Dorsolateral prefrontal cortex (tissue), 120 donors: ENCODE measurements at regions of chr19 and their contacts with region 1.

Region 1: DNA sequence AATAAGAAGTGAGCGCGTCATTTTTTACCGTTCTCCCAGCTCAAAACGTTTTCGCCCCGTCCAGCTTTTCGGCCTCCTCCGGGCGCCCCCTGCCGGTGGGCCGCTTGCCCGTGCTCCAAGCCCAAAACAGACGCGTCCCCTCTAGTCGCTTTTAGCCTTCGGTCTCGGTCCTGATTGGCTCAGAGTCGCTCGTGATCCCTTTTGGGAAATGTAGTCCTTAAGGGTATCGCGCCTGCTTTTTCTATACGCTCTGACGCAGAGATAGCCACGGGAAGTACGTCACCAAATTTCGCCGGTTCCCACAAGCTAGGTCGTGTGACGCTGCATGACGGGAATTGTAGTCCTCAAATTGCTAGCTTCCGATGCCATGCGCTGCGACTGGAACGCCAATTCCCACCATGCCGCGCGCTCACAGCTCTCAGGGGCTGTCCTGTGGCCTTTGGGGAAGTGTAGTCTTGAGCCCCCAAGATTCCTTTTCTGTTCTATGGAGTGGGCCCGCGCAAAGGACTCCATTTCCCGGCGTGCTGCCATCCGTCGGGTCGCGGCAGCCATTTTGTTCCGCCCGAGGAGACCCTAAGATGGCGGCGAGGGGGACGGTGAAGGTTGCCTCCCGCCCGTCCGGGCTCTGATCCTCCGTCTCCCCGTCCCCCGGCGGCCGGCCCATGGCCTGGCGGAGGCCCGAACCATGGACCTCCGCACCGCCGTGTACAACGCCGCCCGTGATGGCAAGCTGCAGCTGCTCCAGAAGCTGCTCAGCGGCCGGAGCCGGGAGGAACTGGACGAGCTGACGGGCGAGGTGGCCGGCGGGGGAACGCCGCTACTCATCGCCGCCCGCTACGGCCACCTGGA is at the start of gene FEM1A:
- DNase-seq: peak; percentile 99 to 100 (median 100)
- H3K4me3 ChIP-seq: peak within 1 kb of the TSS; percentile 55 to 99 (median 89)
- H3K27ac ChIP-seq: peak within 1 kb of the TSS; percentile 51 to 97 (median 89)
- H3K27me3 ChIP-seq: no peaks in the 10 kb centered on the region
- CTCF ChIP-seq: peak; percentile 93 to 100 (median 99)
- total RNA-seq, gene FEM1A: 12.6 to 24.5 (median 16.8) TPM

Region 2: GRCh38 chr19:4732680-4733114 is 58.7 kb before region 1 on chr19:
- intact Hi-C with region 1: loop called (anchors 1 to 2 kb)
- DNase-seq: peak in 7 of 10 donors; percentile 36 to 68 (median 56)
- H3K4me3 ChIP-seq: peak overlapping the region in 44 of 59 donors; percentile 0 to 52 (median 29)
- H3K27ac ChIP-seq: no peak overlapping the region
- H3K27me3 ChIP-seq: peaks cover 0 to 3% (median 0%) of the 10 kb centered on the region in 45 donors
- CTCF ChIP-seq: peak; percentile 44 to 82 (median 74)

Region 3: DNA sequence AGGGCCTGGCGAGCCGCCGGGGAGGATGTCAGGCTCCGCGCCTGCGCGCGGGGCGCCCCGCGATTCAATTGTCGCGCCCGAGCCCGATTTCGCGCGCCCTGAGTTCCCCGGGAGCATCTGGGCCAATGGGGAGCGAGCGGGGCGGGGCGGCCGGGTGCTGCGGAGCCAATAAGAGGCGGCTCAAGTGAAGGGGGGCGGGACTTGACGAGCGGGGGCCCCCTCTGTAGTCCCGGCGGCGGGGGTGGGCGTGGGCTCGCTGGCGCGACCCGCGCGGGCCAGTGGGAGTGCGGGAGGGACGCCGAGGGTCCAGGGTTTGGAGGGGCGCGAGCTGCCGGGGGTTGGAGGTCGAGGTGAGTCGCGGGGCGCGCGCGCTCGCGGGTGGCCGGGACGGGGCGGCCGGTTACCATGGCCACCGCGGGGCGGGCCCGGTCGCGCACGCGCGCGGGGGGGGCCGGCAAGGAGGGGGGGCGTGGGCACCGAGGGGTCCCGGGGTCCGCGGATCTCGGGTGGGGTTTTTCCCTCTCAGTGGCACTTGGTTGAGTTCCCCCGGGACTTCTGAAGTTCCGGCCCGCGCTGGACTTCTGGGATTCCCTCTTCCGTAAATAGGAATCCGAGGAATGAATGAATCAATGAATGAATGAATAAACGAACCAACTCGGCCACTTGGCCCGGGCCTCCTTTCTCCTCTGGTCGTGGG is 118.7 kb after region 1 on chr19:
- intact Hi-C with region 1: no loop called
- DNase-seq: peak; percentile 88 to 95 (median 92)
- H3K4me3 ChIP-seq: peak overlapping the region; percentile 41 to 83 (median 71)
- H3K27ac ChIP-seq: peak overlapping the region in 50 of 59 donors; percentile 24 to 89 (median 74)
- H3K27me3 ChIP-seq: peaks cover 0 to 15% (median 0%) of the 10 kb centered on the region in 45 donors
- CTCF ChIP-seq: peak in 2 of 56 donors; percentile 4 to 28